PC-3 (cell line): ENCODE measurements at regions of chr6 and their contacts with region 1.

Region 1: DNA sequence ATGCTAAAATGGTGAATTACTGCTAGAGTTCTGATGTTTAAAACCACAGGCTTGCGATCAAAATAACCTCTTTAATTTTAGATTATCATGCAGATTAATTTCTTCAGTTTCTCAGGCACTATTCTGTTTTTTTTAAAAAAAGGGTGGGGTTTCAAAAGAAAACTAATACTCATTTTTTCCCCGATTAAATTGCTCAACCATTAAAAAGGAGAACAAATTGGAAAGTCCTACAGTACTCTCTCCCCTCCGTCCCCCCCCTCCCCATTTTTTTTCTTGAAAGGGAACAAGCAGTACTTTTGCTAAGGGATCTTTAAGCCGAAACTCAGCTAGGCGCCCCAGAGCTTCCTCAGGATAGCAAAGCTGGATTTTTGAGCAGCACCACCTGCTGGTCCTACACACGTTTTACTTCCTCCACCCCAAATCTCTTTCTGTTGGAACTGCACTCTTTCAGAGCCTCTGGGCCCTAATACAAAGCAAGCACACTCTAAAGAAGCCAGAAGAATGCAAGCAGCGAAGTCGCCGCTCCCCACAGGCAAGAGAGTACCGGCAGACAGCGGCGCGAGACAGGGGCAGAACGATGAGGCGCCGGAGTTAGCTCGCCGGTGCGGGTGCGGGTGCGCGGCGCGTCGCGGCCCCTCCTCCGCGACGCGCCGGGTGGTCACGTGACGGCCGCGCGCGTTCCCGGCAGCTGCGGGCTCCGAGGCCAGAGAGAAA is at the start of gene RNF146:
- DNase-seq: peak; percentile 68
- ATAC-seq: peak; percentile 76
- H3K4me3 ChIP-seq: peak within 1 kb of the TSS; percentile 97
- H3K27ac ChIP-seq: peak within 1 kb of the TSS; percentile 70
- H3K4me1 ChIP-seq: 0 out of 2 replicates have a peak, but pooled peaks cover 8% of the 10 kb centered on the region
- H3K27me3 ChIP-seq: no peaks in the 10 kb centered on the region
- CTCF ChIP-seq: peak; percentile 74
- total RNA-seq, gene RNF146: 8.7 and 11.6 TPM in 2 replicates

Region 2: GRCh38 chr6:125779924-125780539 is 1486.3 kb before region 1 on chr6:
- CTCF ChIA-PET with region 1: interaction called, 16 read pairs
- POLR2A ChIA-PET with region 1: no interaction called
- intact Hi-C with region 1: no loop called
- DNase-seq: peak; percentile 94
- ATAC-seq: peak; percentile 68
- H3K4me3 ChIP-seq: peak overlapping the region; percentile 94
- H3K27ac ChIP-seq: peak overlapping the region; percentile 54
- H3K4me1 ChIP-seq: peaks cover 15% of the 10 kb centered on the region
- H3K27me3 ChIP-seq: peaks cover 4% of the 10 kb centered on the region; the same call in 1 of the 2 replicates
- CTCF ChIP-seq: no peak

Region 3: GRCh38 chr6:127131275-127131674 is 135.1 kb before region 1 on chr6:
- CTCF ChIA-PET with region 1: no interaction called
- POLR2A ChIA-PET with region 1: interaction called, 4 read pairs
- intact Hi-C with region 1: loop called (anchors 5 kb)
- DNase-seq: no peak
- ATAC-seq: no peak
- H3K4me3 ChIP-seq: no peak overlapping the region
- H3K27ac ChIP-seq: no peak overlapping the region
- H3K4me1 ChIP-seq: no peaks in the 10 kb centered on the region
- H3K27me3 ChIP-seq: no peaks in the 10 kb centered on the region
- CTCF ChIP-seq: no peak

Region 4: DNA sequence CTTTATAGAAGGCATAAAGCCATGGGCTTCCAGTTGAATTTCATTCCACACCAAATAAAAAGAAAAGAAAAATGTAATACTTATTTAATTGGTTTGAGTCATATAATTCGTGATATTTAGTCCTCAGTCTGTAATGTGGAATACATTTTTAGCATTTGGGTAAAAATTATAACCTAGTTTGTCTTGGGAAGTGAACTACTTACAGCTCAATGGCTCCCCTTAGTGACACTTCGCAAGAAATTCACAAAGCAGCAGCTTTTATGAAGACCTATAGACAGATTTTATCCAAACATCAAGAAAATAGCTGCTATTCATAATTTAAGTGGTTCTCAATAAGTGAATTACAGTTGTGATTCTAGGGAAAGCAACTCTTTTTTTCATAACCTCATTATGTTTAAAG is 75.8 kb before region 1 on chr6:
- CTCF ChIA-PET with region 1: interaction called, 9 read pairs
- POLR2A ChIA-PET with region 1: interaction called, 3 read pairs
- intact Hi-C with region 1: loop called (anchors 5 kb)
- DNase-seq: peak; percentile 41
- ATAC-seq: peak; percentile 53; the same call in 1 of the 2 replicates
- H3K4me3 ChIP-seq: no peak overlapping the region
- H3K27ac ChIP-seq: no peak overlapping the region
- H3K4me1 ChIP-seq: no peaks in the 10 kb centered on the region
- H3K27me3 ChIP-seq: no peaks in the 10 kb centered on the region
- CTCF ChIP-seq: peak; percentile 60

Region 5: GRCh38 chr6:127207591-127208120 is 58.7 kb before region 1 on chr6:
- CTCF ChIA-PET with region 1: interaction called, 7 read pairs
- POLR2A ChIA-PET with region 1: no interaction called
- intact Hi-C with region 1: loop called (anchors 5 kb)
- DNase-seq: peak; percentile 40
- ATAC-seq: peak; percentile 73
- H3K4me3 ChIP-seq: no peak overlapping the region
- H3K27ac ChIP-seq: peak overlapping the region; percentile 41
- H3K4me1 ChIP-seq: peaks cover 14% of the 10 kb centered on the region
- H3K27me3 ChIP-seq: no peaks in the 10 kb centered on the region
- CTCF ChIP-seq: no peak